Right ventricle myocardium superior (tissue), 1 donor: ENCODE measurements at regions of chr5 and their contacts with region 1.

Region 1: DNA sequence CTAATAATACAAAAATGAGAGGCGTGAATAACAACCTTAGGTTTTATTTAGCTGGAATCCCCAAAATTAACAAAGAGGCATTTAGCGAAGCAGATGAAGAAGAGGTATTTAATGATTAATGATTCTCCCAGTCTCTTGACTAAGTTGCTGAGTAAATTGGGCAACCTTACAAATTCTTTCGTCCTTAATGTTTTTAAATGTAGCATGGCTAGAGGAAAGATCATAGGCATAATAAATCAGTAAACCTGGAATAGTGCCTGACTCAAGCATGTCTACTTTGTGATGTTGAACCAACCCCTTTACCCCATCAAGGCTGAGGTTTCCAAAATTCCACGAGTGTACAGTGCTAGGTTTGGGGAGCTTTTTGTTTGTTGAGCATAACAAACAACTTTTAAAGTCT is 7.9 kb downstream of the BHMT start:
- DNase-seq: no peak
- ATAC-seq: no peak

Region 2: GRCh38 chr5:79030663-79031484 is 88.6 kb before region 1 on chr5:
- intact Hi-C with region 1: loop called (anchors 5 kb)
- DNase-seq: no peak
- ATAC-seq: no peak

Region 3: GRCh38 chr5:79297661-79298060 is 178.2 kb after region 1 on chr5:
- intact Hi-C with region 1: no loop called
- DNase-seq: no peak
- ATAC-seq: peak; percentile 87